ENCODE measurements at regions of chrX and their contacts with region 1.

Region 1: GRCh38 chrX:40468033-40468846 is 112.5 kb upstream of the ATP6AP2 start:
- DNase-seq: peak; percentile 60 to 61
- H3K4me3 ChIP-seq: no peak overlapping the region
- H3K4me3 Mint-ChIP-seq: no peak overlapping the region
- H3K27ac Mint-ChIP-seq: no peak overlapping the region
- H3K4me1 ChIP-seq: peaks cover 15% of the 10 kb centered on the region; the same call in 1 of the 2 replicates
- H3K4me1 Mint-ChIP-seq: peaks cover 22% of the 10 kb centered on the region
- H3K27me3 ChIP-seq: no peaks in the 10 kb centered on the region
- H3K27me3 Mint-ChIP-seq: no peaks in the 10 kb centered on the region
- CTCF ChIP-seq: peak in 1 of 2 experiments; percentile 32

Region 2: GRCh38 chrX:40108959-40109287 is 359.3 kb before region 1 on chrX:
- CTCF ChIA-PET with region 1: interaction called, 3 read pairs
- POLR2A ChIA-PET with region 1: no interaction called
- intact Hi-C with region 1: loop called (anchors 10 kb)
- DNase-seq: peak in 1 of 2 experiments; percentile 61
- H3K4me3 ChIP-seq: peak overlapping the region; percentile 66
- H3K4me3 Mint-ChIP-seq: peak overlapping the region; percentile 76
- H3K27ac Mint-ChIP-seq: no peak overlapping the region
- H3K4me1 ChIP-seq: peaks cover 2% of the 10 kb centered on the region; the same call in 1 of the 2 replicates
- H3K4me1 Mint-ChIP-seq: peaks cover 6% of the 10 kb centered on the region
- H3K27me3 ChIP-seq: no peaks in the 10 kb centered on the region
- H3K27me3 Mint-ChIP-seq: no peaks in the 10 kb centered on the region
- CTCF ChIP-seq: no peak

Region 3: DNA sequence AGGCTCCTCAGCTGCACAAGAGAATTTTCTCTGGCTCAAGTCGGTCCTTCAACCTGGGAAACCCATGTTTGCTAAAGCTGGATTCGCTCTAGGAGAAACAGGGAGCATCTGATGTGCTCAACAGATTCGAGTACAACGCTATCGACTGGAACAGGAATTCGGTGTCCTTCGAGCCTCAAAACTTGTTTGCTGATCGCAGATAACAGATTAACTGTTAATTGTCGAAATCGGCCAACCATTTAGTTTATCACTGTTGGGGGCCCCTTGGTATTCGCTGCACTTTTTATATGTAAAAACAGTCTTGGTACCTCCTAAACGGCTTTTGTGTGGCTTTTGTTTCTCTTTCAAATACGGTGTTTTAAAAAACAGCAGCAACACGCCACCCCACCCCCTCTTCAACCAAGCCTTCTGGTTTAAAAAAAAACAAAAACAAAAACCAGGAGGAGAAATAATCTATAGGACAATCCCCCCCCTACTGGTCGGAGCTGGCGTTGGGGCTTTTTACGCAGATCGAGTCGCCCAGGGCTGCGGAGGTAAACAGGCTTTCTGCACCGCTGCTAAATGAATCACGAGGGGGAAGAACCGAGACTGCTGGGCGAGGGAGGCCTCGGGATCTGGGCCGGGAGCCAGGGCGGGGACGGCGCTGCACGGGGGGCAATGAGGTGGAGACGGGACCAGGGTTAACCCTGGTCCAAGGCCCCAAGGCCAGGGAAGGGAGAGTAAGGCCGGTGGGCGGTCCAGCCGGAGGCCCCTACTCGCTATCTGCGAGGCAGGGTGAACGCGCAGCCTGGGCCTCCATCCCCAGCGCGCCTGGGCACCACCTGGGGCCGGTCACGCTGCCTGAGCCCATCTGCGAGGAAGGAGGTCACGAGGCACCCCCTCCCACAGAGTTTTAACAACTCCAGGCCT is 298.8 kb before region 1 on chrX:
- CTCF ChIA-PET with region 1: interaction called, 3 read pairs
- POLR2A ChIA-PET with region 1: interaction called, 7 read pairs
- intact Hi-C with region 1: loop called (anchors 1 kb)
- DNase-seq: peak; percentile 68
- H3K4me3 ChIP-seq: no peak overlapping the region
- H3K4me3 Mint-ChIP-seq: peak overlapping the region; percentile 37
- H3K27ac Mint-ChIP-seq: no peak overlapping the region
- H3K4me1 ChIP-seq: peaks cover 15% of the 10 kb centered on the region
- H3K4me1 Mint-ChIP-seq: no peaks in the 10 kb centered on the region
- H3K27me3 ChIP-seq: no peaks in the 10 kb centered on the region
- H3K27me3 Mint-ChIP-seq: no peaks in the 10 kb centered on the region
- CTCF ChIP-seq: peak; percentile 35 to 51

Region 4: DNA sequence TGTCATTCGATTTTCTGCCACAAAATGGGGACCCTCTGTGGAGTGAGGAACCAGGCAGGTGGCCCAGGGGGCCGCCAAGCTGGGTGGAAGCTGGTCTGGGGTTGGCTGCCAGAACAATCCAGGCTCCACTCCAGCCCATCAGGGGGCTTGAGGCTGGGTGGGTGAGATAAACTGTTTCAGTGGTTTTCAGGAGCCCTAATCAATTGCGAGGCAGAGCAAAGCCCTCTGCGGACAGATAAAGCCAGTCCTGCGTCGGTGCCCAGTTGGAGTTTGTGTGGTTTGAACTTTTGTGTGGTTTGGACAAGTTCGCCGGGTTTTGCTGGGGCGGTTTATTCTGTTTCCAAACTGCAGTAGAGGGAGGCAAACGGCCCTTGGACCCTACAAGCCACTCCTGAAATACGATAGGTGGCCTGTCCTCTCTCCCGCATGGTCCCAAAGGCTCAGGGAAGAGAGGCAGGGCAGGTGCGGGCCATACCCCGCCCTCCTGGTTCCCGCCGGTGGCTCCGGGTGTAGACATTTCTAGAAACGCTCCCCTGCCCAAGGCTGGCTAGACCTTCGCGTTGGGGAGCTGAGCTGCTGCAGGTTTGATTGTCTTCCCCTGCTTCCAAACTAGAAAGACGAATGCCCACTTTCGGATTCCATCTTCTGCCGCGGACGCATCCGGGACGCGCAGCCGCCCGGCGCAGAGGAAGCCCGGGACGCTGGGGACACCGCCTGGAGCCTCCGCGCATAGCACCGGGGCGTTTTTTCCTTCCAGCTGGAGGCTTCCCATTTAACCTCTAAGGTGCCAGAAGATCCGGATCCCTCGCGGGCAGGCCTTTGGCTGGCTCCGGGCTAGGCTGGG is 201.5 kb before region 1 on chrX:
- CTCF ChIA-PET with region 1: no interaction called
- POLR2A ChIA-PET with region 1: no interaction called
- intact Hi-C with region 1: loop called (anchors 10 kb)
- DNase-seq: peak; percentile 64 to 76
- H3K4me3 ChIP-seq: peak overlapping the region; percentile 52
- H3K4me3 Mint-ChIP-seq: peak overlapping the region; percentile 63
- H3K27ac Mint-ChIP-seq: peak overlapping the region; percentile 34
- H3K4me1 ChIP-seq: peaks cover 16% of the 10 kb centered on the region; the same call in 1 of the 2 replicates
- H3K4me1 Mint-ChIP-seq: no peaks in the 10 kb centered on the region
- H3K27me3 ChIP-seq: no peaks in the 10 kb centered on the region
- H3K27me3 Mint-ChIP-seq: no peaks in the 10 kb centered on the region
- CTCF ChIP-seq: peak; percentile 49 to 67

Region 5: DNA sequence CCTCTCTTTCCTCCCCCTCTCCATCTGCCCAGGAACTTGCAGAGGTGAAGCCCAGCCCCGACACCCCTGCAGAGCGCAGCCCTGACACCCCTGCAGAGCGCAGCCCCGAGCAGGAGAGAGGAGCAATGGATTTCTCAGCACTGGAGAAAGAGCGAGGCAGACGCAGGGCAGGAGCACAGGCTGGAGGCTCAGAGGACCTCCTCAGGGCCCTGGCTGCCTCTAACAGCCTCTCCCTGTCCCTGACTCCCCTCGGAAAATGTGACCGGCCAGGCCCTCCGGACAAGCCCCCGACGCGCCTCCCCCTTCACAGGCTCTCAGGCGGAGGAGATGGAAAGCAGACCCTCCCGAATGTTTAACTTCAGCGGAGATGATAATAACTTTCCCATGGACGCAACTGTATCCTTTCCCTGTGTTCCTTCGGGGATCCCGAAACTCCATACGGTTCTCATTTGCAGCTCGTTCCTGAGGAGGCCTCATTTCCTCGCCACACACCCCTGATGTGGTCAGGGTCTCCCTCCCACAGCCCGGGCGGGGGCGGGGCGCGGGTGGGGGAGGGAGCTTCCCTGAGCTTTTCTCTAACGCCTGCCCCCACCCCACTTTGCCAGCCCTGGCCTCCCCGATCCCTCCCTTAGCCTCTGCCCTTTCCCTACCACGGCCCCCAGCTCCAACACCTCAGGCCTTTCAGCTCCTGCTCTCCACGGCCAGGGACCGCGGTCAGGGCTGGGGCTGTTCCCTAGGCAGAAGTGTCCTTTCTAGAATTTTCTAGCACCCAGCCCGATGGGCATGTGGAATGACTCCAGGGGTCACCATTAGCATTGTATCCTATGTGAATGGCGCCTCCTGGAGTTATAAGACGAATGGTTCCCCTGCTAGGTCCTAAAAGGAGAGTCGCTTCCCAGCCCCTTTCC is 169.4 kb before region 1 on chrX:
- CTCF ChIA-PET with region 1: interaction called, 6 read pairs
- POLR2A ChIA-PET with region 1: no interaction called
- intact Hi-C with region 1: loop called (anchors 1 kb)
- DNase-seq: peak; percentile 30 to 44
- H3K4me3 ChIP-seq: peak overlapping the region; percentile 8; the same call in 1 of the 2 replicates
- H3K4me3 Mint-ChIP-seq: peak overlapping the region; percentile 67
- H3K27ac Mint-ChIP-seq: peak overlapping the region; percentile 82
- H3K4me1 ChIP-seq: peaks cover 41% of the 10 kb centered on the region
- H3K4me1 Mint-ChIP-seq: peaks cover 21% of the 10 kb centered on the region
- H3K27me3 ChIP-seq: no peaks in the 10 kb centered on the region
- H3K27me3 Mint-ChIP-seq: no peaks in the 10 kb centered on the region
- CTCF ChIP-seq: peak; percentile 19 to 39